ENCODE measurements at regions of chrX and their contacts with region 1.

Region 1: GRCh38 chrX:111244235-111244750 is 26.0 kb downstream of the CAPN6 start:
- DNase-seq: peak; percentile 31
- H3K4me3 Mint-ChIP-seq: no peak overlapping the region
- H3K27ac Mint-ChIP-seq: no peak overlapping the region
- H3K4me1 Mint-ChIP-seq: no peaks in the 10 kb centered on the region
- H3K27me3 Mint-ChIP-seq: peaks cover 100% of the 10 kb centered on the region
- CTCF ChIP-seq: peak; percentile 66

Region 2: DNA sequence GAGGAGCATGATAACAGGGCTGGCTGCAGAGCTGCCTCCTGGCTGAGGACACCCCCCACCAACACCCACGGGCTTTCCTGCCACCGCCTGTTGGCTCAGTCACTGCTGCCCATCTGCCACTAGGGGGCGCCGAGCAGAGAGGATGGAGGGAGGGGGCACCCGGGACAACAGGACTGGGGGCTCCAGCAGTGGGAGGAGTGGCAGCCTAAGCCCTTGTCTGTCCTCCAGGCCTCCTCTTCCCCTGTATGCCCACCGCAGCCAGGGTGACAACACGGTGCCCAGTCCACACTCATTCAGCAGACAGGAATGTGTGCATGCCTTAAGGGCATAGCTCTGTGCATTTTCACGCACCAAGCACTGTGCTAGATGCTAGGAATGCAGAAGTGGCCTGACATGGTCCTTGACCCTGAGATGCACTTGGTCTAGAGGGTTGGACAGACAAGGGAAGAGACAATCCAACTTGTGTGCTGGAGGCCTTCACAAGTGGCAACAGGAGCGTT is 1076.3 kb before region 1 on chrX:
- CTCF ChIA-PET with region 1: no interaction called
- POLR2A ChIA-PET with region 1: no interaction called
- intact Hi-C with region 1: loop called (anchors 5 kb)
- DNase-seq: peak; percentile 49
- H3K4me3 Mint-ChIP-seq: no peak overlapping the region
- H3K27ac Mint-ChIP-seq: no peak overlapping the region
- H3K4me1 Mint-ChIP-seq: peaks cover 20% of the 10 kb centered on the region
- H3K27me3 Mint-ChIP-seq: peaks cover 18% of the 10 kb centered on the region
- CTCF ChIP-seq: peak; percentile 54

Region 3: GRCh38 chrX:110836982-110837381 is 407.3 kb before region 1 on chrX:
- CTCF ChIA-PET with region 1: no interaction called
- POLR2A ChIA-PET with region 1: no interaction called
- intact Hi-C with region 1: no loop called
- DNase-seq: no peak
- H3K4me3 Mint-ChIP-seq: no peak overlapping the region
- H3K27ac Mint-ChIP-seq: no peak overlapping the region
- H3K4me1 Mint-ChIP-seq: no peaks in the 10 kb centered on the region
- H3K27me3 Mint-ChIP-seq: peaks cover 45% of the 10 kb centered on the region
- CTCF ChIP-seq: peak; percentile 7

Region 4: GRCh38 chrX:110853610-110854009 is 390.7 kb before region 1 on chrX:
- CTCF ChIA-PET with region 1: interaction called, 31 read pairs
- POLR2A ChIA-PET with region 1: interaction called, 4 read pairs
- intact Hi-C with region 1: no loop called
- DNase-seq: peak; percentile 67
- H3K4me3 Mint-ChIP-seq: no peak overlapping the region
- H3K27ac Mint-ChIP-seq: no peak overlapping the region
- H3K4me1 Mint-ChIP-seq: peaks cover 9% of the 10 kb centered on the region
- H3K27me3 Mint-ChIP-seq: peaks cover 61% of the 10 kb centered on the region
- CTCF ChIP-seq: peak; percentile 44

Region 5: DNA sequence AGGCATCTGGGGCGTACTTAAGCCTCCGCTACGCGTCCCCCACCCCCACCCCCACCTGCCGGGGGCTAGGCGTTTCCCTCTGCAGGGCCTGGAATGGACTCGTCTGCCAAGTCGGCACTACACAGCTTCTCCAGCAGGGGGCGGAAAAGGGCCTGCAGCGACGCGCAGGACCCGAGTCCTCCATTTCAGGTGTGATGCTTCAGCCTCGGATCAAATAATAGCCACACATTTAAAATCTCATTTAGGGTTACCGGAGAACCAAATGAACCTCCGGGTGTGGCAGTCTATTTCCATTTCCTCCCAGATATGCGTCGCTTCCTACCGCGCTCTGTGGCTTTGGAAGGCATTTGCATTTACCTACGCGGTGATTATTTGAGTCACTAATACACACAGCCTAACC is 145.4 kb before region 1 on chrX:
- CTCF ChIA-PET with region 1: interaction called, 3 read pairs
- POLR2A ChIA-PET with region 1: no interaction called
- intact Hi-C with region 1: loop called (anchors 5 kb)
- DNase-seq: peak; percentile 23
- H3K4me3 Mint-ChIP-seq: no peak overlapping the region
- H3K27ac Mint-ChIP-seq: no peak overlapping the region
- H3K4me1 Mint-ChIP-seq: no peaks in the 10 kb centered on the region
- H3K27me3 Mint-ChIP-seq: peaks cover 42% of the 10 kb centered on the region
- CTCF ChIP-seq: peak; percentile 48

Region 6: GRCh38 chrX:111207851-111208250 is 36.4 kb before region 1 on chrX:
- CTCF ChIA-PET with region 1: no interaction called
- POLR2A ChIA-PET with region 1: no interaction called
- intact Hi-C with region 1: no loop called
- DNase-seq: no peak
- H3K4me3 Mint-ChIP-seq: no peak overlapping the region
- H3K27ac Mint-ChIP-seq: no peak overlapping the region
- H3K4me1 Mint-ChIP-seq: no peaks in the 10 kb centered on the region
- H3K27me3 Mint-ChIP-seq: peaks cover 64% of the 10 kb centered on the region
- CTCF ChIP-seq: no peak

Region 7: GRCh38 chrX:111231251-111231650 is 13.0 kb before region 1 on chrX:
- CTCF ChIA-PET with region 1: interaction called, 15 read pairs
- POLR2A ChIA-PET with region 1: interaction called, 4 read pairs
- intact Hi-C with region 1: no loop called
- DNase-seq: no peak
- H3K4me3 Mint-ChIP-seq: no peak overlapping the region
- H3K27ac Mint-ChIP-seq: no peak overlapping the region
- H3K4me1 Mint-ChIP-seq: no peaks in the 10 kb centered on the region
- H3K27me3 Mint-ChIP-seq: peaks cover 69% of the 10 kb centered on the region
- CTCF ChIP-seq: no peak

Measured in MCF 10A (cell line).